A673 (cell line): ENCODE measurements at regions of chr5 and their contacts with region 1.

Region 1: DNA sequence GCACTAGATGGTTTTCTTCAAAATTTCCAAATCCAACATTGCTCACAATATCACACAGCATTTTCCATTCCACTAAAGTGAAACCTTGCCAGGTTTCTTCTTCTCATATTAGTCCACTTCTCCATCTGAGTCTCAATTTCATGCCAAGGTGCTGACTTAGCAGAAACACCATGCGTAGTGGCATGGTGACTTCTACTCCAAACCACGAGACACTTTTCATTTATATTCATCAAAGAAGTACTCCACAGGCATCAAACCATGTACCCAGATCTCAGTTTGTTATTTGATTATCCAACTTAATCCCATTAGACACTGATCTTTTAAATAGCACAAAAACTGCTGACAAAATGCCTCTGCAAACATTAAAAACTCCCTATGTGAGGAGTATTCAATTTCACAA is 233.4 kb upstream of the ITGA1 start:
- DNase-seq: peak; percentile 84
- H3K4me3 ChIP-seq: no peak overlapping the region
- H3K27ac ChIP-seq: no peak overlapping the region
- H3K4me1 ChIP-seq: peaks cover 26% of the 10 kb centered on the region
- H3K27me3 ChIP-seq: no peaks in the 10 kb centered on the region
- CTCF ChIP-seq: no peak

Region 2: DNA sequence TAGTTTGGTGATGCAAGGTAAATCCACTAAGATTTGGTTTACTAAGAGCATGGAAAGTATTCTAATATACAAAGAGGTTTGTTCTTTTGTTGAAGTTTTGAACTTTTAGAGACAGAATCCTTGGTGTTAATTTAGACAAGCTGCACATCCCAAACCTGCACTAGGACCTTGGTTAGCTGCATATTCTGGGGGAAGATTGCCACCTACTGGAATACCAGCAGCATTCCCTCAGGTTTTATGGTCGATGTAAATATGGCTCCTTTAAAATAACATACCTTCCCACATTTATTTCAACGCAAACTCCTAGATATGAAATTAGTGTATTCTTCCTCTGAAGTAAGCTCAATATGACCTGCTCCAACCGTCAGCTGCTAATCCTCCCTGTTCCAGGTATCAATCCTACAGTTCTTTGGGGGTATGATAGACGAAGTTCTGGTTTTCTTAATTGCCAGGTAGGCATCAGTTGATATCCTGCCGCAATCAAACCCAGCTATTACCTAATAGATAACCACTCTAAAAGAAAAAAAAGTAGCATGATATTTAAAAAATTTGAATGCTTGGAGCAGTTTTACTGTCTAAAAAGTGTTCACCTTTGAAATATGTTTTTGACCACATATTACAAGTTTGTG is 547.0 kb before region 1 on chr5:
- CTCF ChIA-PET with region 1: no interaction called
- POLR2A ChIA-PET with region 1: no interaction called
- intact Hi-C with region 1: loop called (anchors 10 kb)
- DNase-seq: peak; percentile 72
- H3K4me3 ChIP-seq: no peak overlapping the region
- H3K27ac ChIP-seq: no peak overlapping the region
- H3K4me1 ChIP-seq: no peaks in the 10 kb centered on the region
- H3K27me3 ChIP-seq: no peaks in the 10 kb centered on the region
- CTCF ChIP-seq: peak; percentile 84

Region 3: DNA sequence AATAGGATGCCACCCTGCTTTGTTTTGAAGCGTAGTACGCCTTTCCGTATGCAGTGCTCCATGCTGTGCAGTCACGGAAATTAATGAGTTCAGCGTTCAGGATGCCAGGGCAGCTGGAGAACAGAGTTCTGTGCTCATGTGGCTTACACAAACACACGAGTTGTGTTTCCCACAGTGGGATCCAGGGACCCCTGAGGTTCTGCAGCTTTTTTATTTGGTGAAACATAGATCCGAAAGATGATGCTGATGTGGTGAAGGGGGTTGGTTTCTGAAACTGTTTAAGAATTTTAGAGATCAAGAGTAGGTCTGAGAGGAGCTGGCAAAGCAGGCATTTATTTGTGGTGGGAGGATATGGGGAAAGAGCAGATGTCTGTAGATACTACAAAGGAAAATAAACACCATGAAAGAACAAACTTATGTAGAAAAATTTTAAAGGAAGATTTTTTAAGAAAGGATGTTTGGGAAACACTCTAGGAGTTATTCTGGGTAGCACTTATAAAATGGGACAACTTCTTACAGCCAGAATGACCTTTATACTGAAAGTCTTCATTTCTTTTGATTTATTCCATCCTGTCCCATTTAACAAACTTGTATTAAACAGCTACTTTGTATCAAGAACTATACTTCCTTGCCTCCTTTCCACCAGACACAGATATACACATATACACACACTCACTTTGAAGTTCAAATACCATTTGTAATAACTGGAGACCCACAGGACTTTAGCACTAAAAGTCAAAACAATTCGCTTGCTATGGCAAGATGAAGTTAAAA is 286.2 kb after region 1 on chr5:
- CTCF ChIA-PET with region 1: no interaction called
- POLR2A ChIA-PET with region 1: no interaction called
- intact Hi-C with region 1: no loop called
- DNase-seq: peak; percentile 88
- H3K4me3 ChIP-seq: peak overlapping the region; percentile 2
- H3K27ac ChIP-seq: peak overlapping the region; percentile 69
- H3K4me1 ChIP-seq: peaks cover 51% of the 10 kb centered on the region
- H3K27me3 ChIP-seq: no peaks in the 10 kb centered on the region
- CTCF ChIP-seq: no peak